ENCODE measurements at regions of chr19 and their contacts with region 1.

Region 1: GRCh38 chr19:11137542-11138384 is 17.8 kb downstream of the SPC24 start:
- DNase-seq: peak; percentile 90
- H3K4me3 ChIP-seq: peak overlapping the region; percentile 22 to 45
- H3K27ac ChIP-seq: peak overlapping the region; percentile 83 to 86
- H3K4me1 ChIP-seq: peaks cover 20 to 27% of the 10 kb centered on the region in 2 experiments; a peak in 3 of 4 replicates
- H3K27me3 ChIP-seq: no peaks in the 10 kb centered on the region
- CTCF ChIP-seq: peak; percentile 75
- EP300 ChIP-seq: no peak; a peak in 1 of 4 replicates
- RAD21 ChIP-seq: peak; percentile 88

Region 2: GRCh38 chr19:10952809-10953208 is 185.0 kb before region 1 on chr19:
- CTCF ChIA-PET with region 1: no interaction called
- POLR2A ChIA-PET with region 1: no interaction called
- DNase-seq: no peak
- H3K4me3 ChIP-seq: no peak overlapping the region
- H3K27ac ChIP-seq: no peak overlapping the region
- H3K4me1 ChIP-seq: no peaks in the 10 kb centered on the region; a peak in 1 of 4 replicates
- H3K27me3 ChIP-seq: no peaks in the 10 kb centered on the region
- CTCF ChIP-seq: no peak
- EP300 ChIP-seq: no peak
- RAD21 ChIP-seq: no peak

Region 3: GRCh38 chr19:11197264-11198174 is 59.8 kb after region 1 on chr19 and contains the start of gene KANK2:
- CTCF ChIA-PET with region 1: interaction called, 64 read pairs
- POLR2A ChIA-PET with region 1: interaction called, 4 read pairs
- DNase-seq: peak; percentile 99
- H3K4me3 ChIP-seq: peak within 1 kb of the TSS; percentile 80 to 86
- H3K27ac ChIP-seq: peak within 1 kb of the TSS; percentile 57 to 89
- H3K4me1 ChIP-seq: peaks cover 5 to 16% of the 10 kb centered on the region in 2 experiments; a peak in 2 of 4 replicates
- H3K27me3 ChIP-seq: no peaks in the 10 kb centered on the region
- CTCF ChIP-seq: no peak
- EP300 ChIP-seq: peak in 1 of 2 experiments; percentile 26; a peak in 1 of 4 replicates
- RAD21 ChIP-seq: peak; percentile 49
- polyA plus RNA-seq, gene KANK2: 63.9 and 92.4 TPM in 2 replicates

Region 4: GRCh38 chr19:11203194-11204075 is 65.7 kb after region 1 on chr19:
- CTCF ChIA-PET with region 1: interaction called, 64 read pairs
- POLR2A ChIA-PET with region 1: interaction called, 3 read pairs
- DNase-seq: peak; percentile 93
- H3K4me3 ChIP-seq: no peak overlapping the region
- H3K27ac ChIP-seq: peak overlapping the region; percentile 56 to 79; a peak in 3 of 4 replicates
- H3K4me1 ChIP-seq: peaks cover 4 to 8% of the 10 kb centered on the region in 2 experiments; a peak in 3 of 4 replicates
- H3K27me3 ChIP-seq: no peaks in the 10 kb centered on the region
- CTCF ChIP-seq: peak; percentile 79
- EP300 ChIP-seq: no peak
- RAD21 ChIP-seq: peak; percentile 82